ENCODE measurements at regions of chr2 and their contacts with region 1.

Region 1: GRCh38 chr2:20642055-20642971 is 8.6 kb downstream of the HS1BP3 start:
- DNase-seq: peak; percentile 62 to 79

Region 2: GRCh38 chr2:20446917-20447436 is 195.3 kb before region 1 on chr2 and contains the start of gene RHOB:
- in situ Hi-C with region 1: loop called (anchors 25 kb)
- DNase-seq: peak; percentile 93 to 98

Region 3: DNA sequence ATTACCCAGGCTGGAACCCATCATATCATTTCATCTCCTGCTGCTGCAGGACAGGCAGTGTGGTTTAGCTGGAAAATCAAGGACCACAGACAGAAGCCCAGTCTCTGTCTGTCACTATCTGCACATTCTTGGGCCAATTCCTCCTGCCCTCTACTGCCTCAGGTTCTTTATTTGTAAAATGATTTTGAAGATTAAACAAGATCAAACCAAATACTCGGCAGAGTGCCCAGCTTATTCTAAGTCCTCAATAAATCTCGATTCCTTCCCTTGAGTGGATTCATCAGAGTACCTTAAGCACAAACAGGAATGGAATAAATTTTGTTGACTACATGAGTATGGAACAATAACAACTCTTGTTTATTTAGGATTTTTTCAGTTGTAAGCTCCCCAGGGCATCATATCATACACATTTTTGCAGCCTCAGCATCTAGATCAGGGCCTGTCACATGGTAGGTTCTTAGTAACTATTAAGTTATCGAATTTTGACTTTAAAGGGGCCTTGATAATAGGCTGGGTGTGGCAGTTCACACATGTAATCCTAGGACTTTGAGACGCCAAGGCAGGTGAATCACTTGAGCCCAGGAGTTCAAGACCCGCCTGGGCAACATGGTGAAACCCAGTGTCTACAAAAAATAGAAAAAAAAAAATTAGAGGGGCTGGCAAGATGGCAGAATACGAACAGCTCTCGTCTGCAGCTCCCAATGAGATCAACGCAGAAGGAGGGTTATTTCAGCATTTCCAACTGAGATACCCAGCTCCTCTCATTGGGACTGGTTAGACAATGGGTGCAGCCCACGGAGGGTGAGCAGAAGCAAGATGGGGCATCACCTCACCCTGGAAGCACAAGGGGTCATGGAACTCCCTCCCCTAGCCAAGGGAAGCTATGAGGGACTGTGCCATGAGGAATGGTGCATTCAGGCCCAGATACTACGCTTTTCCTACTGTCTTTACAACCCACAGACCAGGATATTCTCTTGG is 184.4 kb before region 1 on chr2:
- in situ Hi-C with region 1: no loop called
- DNase-seq: peak in 1 of 2 experiments; percentile 77

Region 4: DNA sequence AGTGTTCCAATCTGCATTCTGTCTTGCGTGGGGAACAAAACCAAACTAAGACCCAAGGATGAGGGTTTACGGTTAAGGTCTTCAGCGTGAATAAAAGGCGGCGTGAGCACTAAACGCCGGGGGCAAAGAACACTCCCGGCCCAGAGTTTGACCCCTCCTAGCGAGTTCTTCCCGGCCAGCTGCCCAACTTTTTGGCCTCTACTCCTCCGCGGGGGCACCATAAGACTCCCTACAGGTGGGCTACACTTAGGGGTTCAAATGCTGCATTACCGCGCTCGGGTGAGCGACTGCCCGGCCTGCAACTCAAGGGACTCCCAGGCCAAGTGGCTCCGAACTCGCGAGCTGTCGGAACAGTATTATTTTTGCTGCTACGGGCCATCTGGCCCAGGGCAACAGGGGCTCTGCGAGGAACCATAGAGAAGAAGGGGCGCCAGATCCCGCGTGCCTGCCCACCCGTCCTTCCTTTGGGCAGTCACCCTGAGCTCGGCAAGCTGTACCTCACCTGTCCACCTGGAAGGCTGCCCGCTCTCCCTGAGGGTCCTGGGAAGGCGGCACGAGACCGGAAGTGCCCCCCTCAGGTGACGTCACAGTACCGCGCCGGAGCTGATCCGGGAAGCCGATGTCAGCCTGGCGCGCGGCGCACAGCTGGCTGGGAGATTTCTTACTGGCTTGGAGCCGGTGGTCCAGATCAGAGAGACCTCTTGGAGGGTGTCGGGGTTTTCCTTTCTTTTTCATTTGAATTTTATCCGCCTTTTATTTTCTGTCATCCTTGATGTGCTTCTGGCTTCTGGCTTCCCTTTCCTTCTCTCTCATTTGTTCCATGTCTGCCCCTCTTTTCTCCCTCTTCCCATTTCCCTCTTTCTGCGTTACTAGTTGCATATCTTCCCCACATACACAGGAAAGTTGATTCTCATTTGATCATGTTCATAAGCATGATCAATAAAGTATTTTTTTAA is 180.5 kb after region 1 on chr2 and contains the start of gene LDAH:
- in situ Hi-C with region 1: no loop called
- DNase-seq: peak; percentile 53 to 86